ENCODE measurements at regions of chr9 and their contacts with region 1.

Region 1: GRCh38 chr9:75890472-75891276 is at the start of gene PCSK5:
- DNase-seq: peak; percentile 87 to 94
- ATAC-seq: peak; percentile 95 to 99 (median 98)
- H3K4me3 ChIP-seq: peak within 1 kb of the TSS; percentile 68 to 93 (median 86)
- H3K27ac ChIP-seq: peak within 1 kb of the TSS; percentile 64 to 90 (median 84)
- H3K4me1 ChIP-seq: peaks cover 0 to 30% (median 24%) of the 10 kb centered on the region in 9 donors
- H3K27me3 ChIP-seq: peaks cover 0 to 22% (median 0%) of the 10 kb centered on the region in 7 donors
- CTCF ChIP-seq: peak in 7 of 9 donors; percentile 13 to 55 (median 38)
- total RNA-seq, gene PCSK5: 3.3 to 8.3 (median 6.4) TPM

Region 2: GRCh38 chr9:75953218-75953617 is 62.5 kb after region 1 on chr9:
- intact Hi-C with region 1: loop called in 1 of 10 experiments (anchors 10 kb)
- DNase-seq: no peak
- ATAC-seq: peak in 1 of 8 donors; percentile 29
- H3K4me3 ChIP-seq: no peak overlapping the region
- H3K27ac ChIP-seq: no peak overlapping the region
- H3K4me1 ChIP-seq: no peaks in the 10 kb centered on the region
- H3K27me3 ChIP-seq: no peaks in the 10 kb centered on the region
- CTCF ChIP-seq: no peak

Region 3: DNA sequence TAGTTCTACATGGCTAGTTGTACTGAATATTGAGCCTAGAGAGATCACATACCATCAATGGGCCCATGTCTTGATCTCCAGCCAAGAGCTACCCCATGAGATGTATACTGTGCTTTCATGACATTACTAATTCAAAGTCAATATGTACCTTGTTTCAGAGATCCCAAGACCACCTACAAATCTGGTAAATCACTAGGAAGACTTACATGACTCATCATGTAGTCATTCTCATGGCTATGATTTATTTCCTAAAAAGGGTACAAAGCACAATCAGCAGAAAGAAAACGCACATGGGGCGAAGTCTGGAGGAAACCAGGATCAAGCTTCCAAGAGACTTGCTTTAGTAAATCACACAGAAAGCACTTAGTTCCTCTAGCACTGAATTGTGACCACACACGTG is 102.8 kb after region 1 on chr9:
- intact Hi-C with region 1: loop called in 1 of 10 experiments (anchors 10 kb)
- DNase-seq: no peak
- ATAC-seq: no peak
- H3K4me3 ChIP-seq: no peak overlapping the region
- H3K27ac ChIP-seq: no peak overlapping the region
- H3K4me1 ChIP-seq: peaks cover 0 to 13% (median 0%) of the 10 kb centered on the region in 9 donors
- H3K27me3 ChIP-seq: no peaks in the 10 kb centered on the region
- CTCF ChIP-seq: no peak

Region 4: GRCh38 chr9:76018235-76018634 is 127.6 kb after region 1 on chr9:
- intact Hi-C with region 1: loop called in 1 of 10 experiments (anchors 10 kb)
- DNase-seq: no peak
- ATAC-seq: no peak
- H3K4me3 ChIP-seq: no peak overlapping the region
- H3K27ac ChIP-seq: no peak overlapping the region
- H3K4me1 ChIP-seq: no peaks in the 10 kb centered on the region
- H3K27me3 ChIP-seq: no peaks in the 10 kb centered on the region
- CTCF ChIP-seq: no peak

Region 5: GRCh38 chr9:76161541-76161940 is 270.9 kb after region 1 on chr9:
- intact Hi-C with region 1: loop called in 1 of 10 experiments (anchors 10 kb)
- DNase-seq: peak in 1 of 2 donors; percentile 20
- ATAC-seq: peak; percentile 49 to 85 (median 79)
- H3K4me3 ChIP-seq: peak overlapping the region in 3 of 10 donors; percentile 2 to 23 (median 6)
- H3K27ac ChIP-seq: peak overlapping the region in 5 of 10 donors; percentile 3 to 49 (median 36)
- H3K4me1 ChIP-seq: peaks cover 0 to 28% (median 15%) of the 10 kb centered on the region in 9 donors
- H3K27me3 ChIP-seq: no peaks in the 10 kb centered on the region
- CTCF ChIP-seq: no peak

Region 6: DNA sequence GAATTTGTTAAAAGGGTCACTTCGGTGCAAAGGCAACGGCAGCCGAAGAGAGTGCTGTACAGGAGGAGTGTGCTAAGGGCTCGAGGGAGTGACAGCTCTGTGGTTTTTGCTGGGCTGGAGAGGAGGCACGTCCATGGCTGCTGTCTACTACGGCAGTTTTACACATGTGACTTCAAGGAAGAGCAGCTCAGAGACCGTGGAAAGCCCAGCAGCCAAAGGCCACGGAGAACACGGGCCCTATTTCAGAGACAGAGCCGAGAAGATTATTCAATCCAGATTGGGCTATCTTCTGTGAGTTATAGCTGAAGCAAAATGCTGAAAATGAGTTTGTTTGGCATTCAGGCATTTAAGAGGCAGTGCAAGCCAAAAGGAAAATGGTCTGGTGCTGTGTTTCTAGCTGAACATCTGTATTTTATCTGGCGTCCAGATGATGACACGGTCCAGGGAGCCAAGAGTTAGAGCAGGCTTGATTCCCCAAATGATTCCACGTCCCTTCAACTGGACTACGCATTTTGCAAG is 407.1 kb after region 1 on chr9:
- intact Hi-C with region 1: loop called in 2 of 10 experiments (anchors 10 kb)
- DNase-seq: peak; percentile 25 to 40
- ATAC-seq: peak; percentile 73 to 86 (median 81)
- H3K4me3 ChIP-seq: peak overlapping the region in 3 of 10 donors; percentile 3 to 22 (median 7)
- H3K27ac ChIP-seq: peak overlapping the region in 9 of 10 donors; percentile 4 to 63 (median 41)
- H3K4me1 ChIP-seq: peaks cover 0 to 20% (median 0%) of the 10 kb centered on the region in 9 donors
- H3K27me3 ChIP-seq: peaks cover 0 to 9% (median 0%) of the 10 kb centered on the region in 7 donors
- CTCF ChIP-seq: no peak

Region 7: DNA sequence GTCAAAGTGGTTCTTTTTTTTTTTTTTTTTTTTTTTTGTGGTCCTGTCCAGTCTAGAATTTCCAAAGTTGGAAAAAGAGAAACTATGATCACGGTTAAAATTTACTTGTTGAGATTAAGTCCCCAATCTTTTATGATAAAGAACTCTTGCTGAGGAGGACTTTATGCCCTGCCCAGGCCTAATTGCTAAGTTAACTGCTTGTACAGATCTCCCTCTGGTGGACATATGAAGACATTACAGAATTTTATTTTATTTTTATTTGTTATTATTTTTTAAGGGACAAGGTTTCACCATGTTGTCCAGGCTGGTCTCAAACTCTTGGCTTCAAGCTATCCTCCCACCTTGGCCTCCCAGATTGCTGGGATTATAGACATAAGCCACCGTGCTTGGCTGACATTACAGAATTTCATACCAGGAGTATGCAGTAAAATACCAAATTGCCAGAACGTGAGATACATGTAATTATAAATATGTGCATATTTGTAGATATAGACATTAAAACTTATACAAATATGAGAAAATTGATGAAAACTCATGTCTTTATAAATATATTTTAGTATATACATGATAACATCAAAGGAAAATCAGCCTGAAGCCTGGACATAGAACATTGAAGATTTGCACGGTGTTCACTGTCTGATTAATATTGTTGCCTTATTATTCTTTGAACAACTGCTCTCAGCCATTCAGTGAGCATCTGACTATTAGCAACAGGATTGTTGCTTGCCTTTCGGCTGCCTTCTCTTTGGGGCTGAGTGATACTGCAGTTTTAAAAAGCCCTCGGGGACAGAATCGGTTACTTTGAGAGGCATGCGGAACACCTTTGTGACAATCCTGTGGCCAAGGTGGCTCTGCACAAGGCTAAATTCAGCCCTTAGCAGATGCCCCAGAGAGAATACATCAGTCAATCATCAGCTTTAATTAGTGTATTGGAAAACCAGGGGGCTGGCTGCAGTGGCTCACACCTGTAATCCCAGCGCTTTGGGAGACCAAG is 412.6 kb after region 1 on chr9:
- intact Hi-C with region 1: loop called in 2 of 10 experiments (anchors 10 kb)
- DNase-seq: no peak
- ATAC-seq: peak in 4 of 8 donors; percentile 31 to 67 (median 48)
- H3K4me3 ChIP-seq: no peak overlapping the region
- H3K27ac ChIP-seq: no peak overlapping the region
- H3K4me1 ChIP-seq: peaks cover 0 to 5% (median 0%) of the 10 kb centered on the region in 9 donors
- H3K27me3 ChIP-seq: peaks cover 0 to 12% (median 5%) of the 10 kb centered on the region in 7 donors
- CTCF ChIP-seq: peak; percentile 62 to 80 (median 77)